Activated naive CD4-positive, alpha-beta T cell treated with anti-CD3 and anti-CD28 coated beads, Interleukin-2, amount 10 ng/mL, durations not matched to agents 7 days and 5 days (primary cell): ENCODE measurements at regions of chr5 and their contacts with region 1.

Region 1: GRCh38 chr5:139422307-139422893 is 16.9 kb downstream of the DNAJC18 start:
- DNase-seq: peak; percentile 68
- H3K4me3 Mint-ChIP-seq: no peak overlapping the region
- H3K27ac Mint-ChIP-seq: peak overlapping the region; percentile 8
- H3K4me1 Mint-ChIP-seq: peaks cover 27% of the 10 kb centered on the region
- H3K27me3 Mint-ChIP-seq: no peaks in the 10 kb centered on the region

Region 2: GRCh38 chr5:139262742-139263445 is 159.5 kb before region 1 on chr5:
- CTCF ChIA-PET with region 1: no interaction called
- DNase-seq: peak; percentile 81
- H3K4me3 Mint-ChIP-seq: no peak overlapping the region
- H3K27ac Mint-ChIP-seq: no peak overlapping the region
- H3K4me1 Mint-ChIP-seq: peaks cover 2% of the 10 kb centered on the region
- H3K27me3 Mint-ChIP-seq: peaks cover 46% of the 10 kb centered on the region

Region 3: GRCh38 chr5:139439013-139439903 is 16.9 kb after region 1 on chr5 and contains the start of gene DNAJC18:
- CTCF ChIA-PET with region 1: interaction called, 63 read pairs
- DNase-seq: peak; percentile 94
- H3K4me3 Mint-ChIP-seq: peak within 1 kb of the TSS; percentile 98
- H3K27ac Mint-ChIP-seq: peak within 1 kb of the TSS; percentile 99
- H3K4me1 Mint-ChIP-seq: peaks cover 60% of the 10 kb centered on the region
- H3K27me3 Mint-ChIP-seq: peaks cover 8% of the 10 kb centered on the region

Region 4: DNA sequence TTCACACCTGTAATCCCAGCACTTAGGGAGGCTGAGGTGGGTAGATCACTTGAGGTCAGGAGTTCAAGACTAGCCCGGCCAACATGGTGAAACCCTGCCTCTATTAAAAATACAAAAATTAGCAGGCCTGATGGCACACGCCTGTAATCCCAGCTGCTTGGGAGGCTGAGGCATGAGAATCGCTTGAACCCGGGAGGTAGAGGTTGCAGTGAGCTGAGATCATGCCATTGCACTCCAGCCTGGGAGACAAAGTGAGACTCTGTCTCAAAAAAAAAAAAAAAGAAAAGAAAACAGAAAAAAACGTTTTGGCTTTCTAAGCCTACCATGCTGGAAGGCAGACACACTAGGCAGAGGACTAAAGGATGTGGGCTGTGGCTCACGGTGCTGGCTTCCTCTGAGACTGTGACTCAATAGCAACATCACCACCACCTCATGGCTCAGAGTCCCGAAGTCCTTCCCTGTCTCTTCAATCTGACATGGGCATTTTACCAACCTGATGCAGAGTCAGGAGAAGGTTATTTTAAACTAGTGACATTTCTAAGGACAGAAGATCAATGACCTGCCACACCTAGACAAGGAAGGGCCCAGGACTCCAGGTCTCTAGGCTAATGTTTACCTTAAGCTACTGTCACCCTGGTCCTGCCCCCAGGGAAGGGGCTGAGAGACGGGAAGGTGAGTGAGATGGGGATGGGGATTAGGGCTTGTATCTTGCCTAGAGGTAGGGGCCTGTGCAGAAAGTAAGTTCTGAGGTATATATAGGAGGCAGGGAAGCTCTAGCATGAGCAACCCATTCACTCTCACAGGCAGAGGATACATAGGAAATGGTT is 36.4 kb after region 1 on chr5:
- CTCF ChIA-PET with region 1: interaction called, 21 read pairs
- DNase-seq: peak; percentile 90
- H3K4me3 Mint-ChIP-seq: peak overlapping the region; percentile 48
- H3K27ac Mint-ChIP-seq: peak overlapping the region; percentile 91
- H3K4me1 Mint-ChIP-seq: peaks cover 74% of the 10 kb centered on the region
- H3K27me3 Mint-ChIP-seq: peaks cover 10% of the 10 kb centered on the region

Region 5: GRCh38 chr5:139475865-139476617 is 53.6 kb after region 1 on chr5:
- CTCF ChIA-PET with region 1: interaction called, 29 read pairs
- DNase-seq: peak; percentile 20
- H3K4me3 Mint-ChIP-seq: peak overlapping the region; percentile 48
- H3K27ac Mint-ChIP-seq: peak overlapping the region; percentile 86
- H3K4me1 Mint-ChIP-seq: peaks cover 93% of the 10 kb centered on the region
- H3K27me3 Mint-ChIP-seq: no peaks in the 10 kb centered on the region

Region 6: GRCh38 chr5:139482050-139482889 is 59.9 kb after region 1 on chr5 and contains the start of gene STING1:
- CTCF ChIA-PET with region 1: interaction called, 29 read pairs
- DNase-seq: peak; percentile 80
- H3K4me3 Mint-ChIP-seq: peak within 1 kb of the TSS; percentile 87
- H3K27ac Mint-ChIP-seq: peak within 1 kb of the TSS; percentile 97
- H3K4me1 Mint-ChIP-seq: peaks cover 47% of the 10 kb centered on the region
- H3K27me3 Mint-ChIP-seq: no peaks in the 10 kb centered on the region

Region 7: DNA sequence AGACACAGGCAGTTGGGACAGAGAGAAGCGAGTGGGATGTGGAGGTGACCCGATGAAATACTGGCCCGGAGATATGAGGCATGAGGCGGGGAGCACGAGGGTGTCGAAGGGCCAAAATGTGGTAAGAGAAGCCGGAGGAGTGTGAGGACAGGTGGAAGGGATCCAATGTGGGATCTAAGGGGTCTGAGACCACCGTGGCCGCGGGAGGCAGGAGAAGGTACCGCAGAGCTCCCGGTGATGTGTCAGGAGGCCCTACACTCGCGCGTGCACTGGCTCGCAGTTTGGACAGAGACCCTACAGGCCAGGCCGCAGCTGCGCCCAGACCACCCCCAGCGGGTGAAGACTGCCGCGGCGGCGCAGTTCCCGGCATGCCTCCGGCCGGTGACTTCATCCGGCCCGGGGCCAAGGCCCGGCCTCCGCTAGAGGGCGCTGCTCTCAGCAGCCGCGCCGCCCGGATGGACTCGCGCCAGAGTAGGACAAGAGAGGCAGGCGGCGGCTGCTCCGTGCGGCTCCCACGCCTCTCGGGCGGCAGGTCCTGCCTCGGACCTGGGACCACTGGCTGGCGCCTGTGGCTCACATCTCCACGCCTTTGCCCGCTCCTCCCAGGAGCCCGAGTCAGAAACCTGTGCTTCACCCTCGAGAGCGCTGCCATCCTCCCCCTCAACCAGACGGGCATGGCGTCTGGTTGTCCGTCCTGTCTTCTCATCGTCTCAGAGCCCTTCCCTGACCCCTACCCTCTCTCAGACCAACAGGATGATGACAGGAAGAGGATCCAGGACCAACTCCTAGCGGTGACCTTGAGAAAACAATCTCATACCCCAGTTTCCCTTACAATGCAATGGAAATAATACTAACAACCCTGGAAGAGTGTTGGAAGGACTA is 95.5 kb after region 1 on chr5:
- CTCF ChIA-PET with region 1: interaction called, 436 read pairs
- DNase-seq: peak; percentile 91
- H3K4me3 Mint-ChIP-seq: peak overlapping the region; percentile 73
- H3K27ac Mint-ChIP-seq: peak overlapping the region; percentile 90
- H3K4me1 Mint-ChIP-seq: peaks cover 30% of the 10 kb centered on the region
- H3K27me3 Mint-ChIP-seq: peaks cover 23% of the 10 kb centered on the region

Region 8: GRCh38 chr5:139611703-139612584 is 189.5 kb after region 1 on chr5:
- CTCF ChIA-PET with region 1: no interaction called
- DNase-seq: no peak
- H3K4me3 Mint-ChIP-seq: no peak overlapping the region
- H3K27ac Mint-ChIP-seq: no peak overlapping the region
- H3K4me1 Mint-ChIP-seq: peaks cover 10% of the 10 kb centered on the region
- H3K27me3 Mint-ChIP-seq: no peaks in the 10 kb centered on the region